Heart right ventricle (tissue), 16 donors: ENCODE measurements at regions of chr9 and their contacts with region 1.

Region 1: DNA sequence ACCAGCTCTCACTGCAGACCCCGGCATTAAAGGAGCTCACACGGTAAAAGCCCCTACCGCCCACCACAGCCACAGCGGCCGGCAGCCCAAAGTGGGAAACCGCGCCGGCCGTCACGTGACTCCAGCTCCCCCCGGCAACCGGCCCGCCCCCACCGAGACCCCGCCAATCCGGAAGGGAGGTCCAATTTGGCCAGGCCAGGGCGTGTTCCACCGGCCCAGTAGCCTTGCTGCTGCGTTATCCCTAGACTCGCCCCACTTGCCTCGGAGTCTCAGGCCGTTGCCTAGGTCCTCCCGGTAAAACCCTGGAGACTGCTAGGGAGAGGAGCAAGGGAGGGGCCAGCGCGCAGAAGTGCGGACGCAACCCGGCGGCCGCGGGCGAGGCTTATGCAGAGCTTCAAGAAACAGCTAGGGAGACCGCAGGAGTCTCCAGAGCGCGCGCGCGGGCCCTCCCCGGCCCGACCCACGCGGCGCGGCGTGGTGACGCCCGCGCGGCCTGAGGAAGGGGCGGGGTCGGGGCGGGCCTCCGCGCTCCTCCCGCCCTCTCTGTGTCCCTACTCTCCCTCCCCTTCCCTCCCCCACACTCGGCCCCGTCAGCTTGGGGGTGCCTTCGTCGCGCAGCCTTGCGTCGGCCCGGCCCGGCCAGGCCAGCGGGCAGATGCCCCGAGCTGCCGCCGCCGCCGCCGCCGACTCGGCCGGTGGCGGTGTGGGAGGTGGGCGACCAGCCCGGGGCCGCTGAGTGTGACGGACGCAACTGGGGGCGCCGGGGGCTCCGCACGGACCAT is at the start of gene RIC1:
- DNase-seq: peak; percentile 92 to 93
- ATAC-seq: peak; percentile 93 to 98 (median 96)
- H3K4me3 ChIP-seq: peak within 1 kb of the TSS; percentile 89 to 100 (median 94)
- H3K27ac ChIP-seq: peak within 1 kb of the TSS; percentile 94 to 100 (median 97)
- H3K4me1 ChIP-seq: peaks cover 0 to 77% (median 47%) of the 10 kb centered on the region in 9 donors
- H3K27me3 ChIP-seq: no peaks in the 10 kb centered on the region
- CTCF ChIP-seq: peak in 5 of 9 donors; percentile 5 to 26 (median 22)
- total RNA-seq, gene RIC1: 7.8 to 13.8 (median 8.5) TPM

Region 2: DNA sequence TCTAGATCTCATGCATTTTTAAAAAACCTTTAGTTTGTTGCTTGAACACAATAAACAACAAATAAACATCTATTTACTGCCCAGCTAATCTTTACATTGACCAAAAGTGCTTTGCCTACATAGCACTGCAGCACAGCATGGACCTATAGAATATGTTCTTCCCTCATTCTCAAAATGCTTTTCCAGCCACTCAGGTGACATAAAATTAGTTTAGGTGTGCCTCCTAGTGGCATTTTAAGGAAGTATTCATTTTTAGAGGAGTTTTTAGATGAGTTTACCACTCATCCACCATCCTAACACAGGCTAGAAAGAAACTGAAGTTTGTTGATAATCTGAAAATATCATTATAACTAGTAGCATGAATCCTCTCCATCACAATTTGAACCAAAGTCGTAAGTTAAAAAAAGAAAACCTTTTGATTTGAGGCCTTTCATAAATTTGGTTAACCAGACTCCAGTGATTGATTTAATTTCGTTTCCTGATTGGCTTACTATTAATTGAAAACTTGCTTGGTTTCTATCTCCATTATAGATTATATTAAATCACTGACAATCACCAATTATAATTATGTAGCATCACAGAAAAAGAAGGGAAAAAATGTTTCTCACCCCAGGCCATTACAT is 203.6 kb before region 1 on chr9:
- intact Hi-C with region 1: no loop called
- DNase-seq: no peak
- ATAC-seq: no peak
- H3K4me3 ChIP-seq: no peak overlapping the region
- H3K27ac ChIP-seq: no peak overlapping the region
- H3K4me1 ChIP-seq: no peaks in the 10 kb centered on the region
- H3K27me3 ChIP-seq: no peaks in the 10 kb centered on the region
- CTCF ChIP-seq: peak in 7 of 9 donors; percentile 30 to 57 (median 46)

Region 3: GRCh38 chr9:5665059-5665458 is 36.3 kb after region 1 on chr9:
- intact Hi-C with region 1: loop called in 1 of 10 experiments (anchors 5 kb)
- DNase-seq: no peak
- ATAC-seq: peak in 3 of 8 donors; percentile 31 to 56 (median 42)
- H3K4me3 ChIP-seq: no peak overlapping the region
- H3K27ac ChIP-seq: no peak overlapping the region
- H3K4me1 ChIP-seq: peaks cover 0 to 13% (median 4%) of the 10 kb centered on the region in 9 donors
- H3K27me3 ChIP-seq: no peaks in the 10 kb centered on the region
- CTCF ChIP-seq: no peak

Region 4: DNA sequence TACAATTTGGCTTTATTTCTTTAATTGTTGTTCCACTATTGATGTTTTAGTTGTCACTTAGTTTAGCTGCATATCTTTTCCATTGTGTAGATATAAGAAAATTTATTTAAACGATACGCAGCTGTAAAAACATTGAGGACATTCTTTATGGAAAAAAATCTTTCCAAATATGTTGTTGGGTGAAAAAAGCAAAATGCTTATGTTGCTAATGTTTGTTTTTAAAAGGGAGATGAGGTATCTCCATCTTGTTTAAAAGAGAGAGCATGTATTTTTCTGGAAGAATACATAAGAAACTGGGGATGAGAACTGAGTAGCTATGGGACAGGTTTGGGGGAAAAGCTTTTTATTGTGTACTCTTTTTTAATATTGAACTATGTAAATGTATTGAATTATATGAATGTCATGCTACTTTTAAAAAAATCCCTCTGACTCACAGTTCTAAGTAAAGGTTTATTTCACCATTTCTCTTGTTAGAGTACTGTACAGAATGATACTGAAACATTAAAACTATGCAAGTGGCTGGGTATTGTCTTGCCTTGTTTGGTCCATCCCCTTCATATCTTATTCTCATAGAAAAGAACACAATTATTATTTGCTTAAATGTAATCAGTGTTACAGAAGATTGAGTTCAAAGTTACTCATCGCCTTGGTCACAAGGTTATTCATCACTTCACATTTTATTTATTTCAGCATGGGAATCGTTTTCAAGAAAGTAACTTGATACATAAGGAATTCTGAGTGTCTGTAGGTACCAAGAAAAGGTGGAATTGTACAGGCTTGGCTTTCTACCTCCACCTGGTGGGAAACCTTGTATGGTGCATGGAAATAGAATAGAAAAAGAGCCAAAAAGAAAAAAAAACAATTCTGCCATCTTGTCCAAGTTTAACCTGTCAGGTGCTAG is 86.0 kb after region 1 on chr9:
- intact Hi-C with region 1: loop called in 1 of 10 experiments (anchors 10 kb)
- DNase-seq: no peak
- ATAC-seq: no peak
- H3K4me3 ChIP-seq: no peak overlapping the region
- H3K27ac ChIP-seq: no peak overlapping the region
- H3K4me1 ChIP-seq: peaks cover 0 to 5% (median 0%) of the 10 kb centered on the region in 9 donors
- H3K27me3 ChIP-seq: no peaks in the 10 kb centered on the region
- CTCF ChIP-seq: peak in 2 of 9 donors; percentile 14 to 19

Region 5: DNA sequence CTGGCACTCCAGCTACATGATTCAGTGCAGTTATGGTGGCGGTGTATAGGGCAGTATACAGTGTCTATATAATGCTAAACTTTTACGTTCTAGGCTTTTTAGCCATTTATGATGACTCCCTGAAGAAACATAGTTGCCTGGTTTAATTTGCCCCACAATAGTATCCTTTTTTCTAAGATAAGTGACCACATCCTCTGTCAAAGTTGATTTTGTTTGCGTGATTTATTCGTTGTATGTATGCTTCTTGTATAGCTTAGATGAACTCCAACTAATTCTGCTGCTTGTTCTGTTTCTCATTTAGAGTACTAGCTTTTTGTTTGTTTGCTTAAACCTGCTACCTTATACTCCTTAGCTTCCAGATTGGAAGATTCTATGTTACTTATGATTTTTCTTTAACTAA is 120.6 kb after region 1 on chr9:
- intact Hi-C with region 1: loop called in 1 of 10 experiments (anchors 10 kb)
- DNase-seq: no peak
- ATAC-seq: no peak
- H3K4me3 ChIP-seq: no peak overlapping the region
- H3K27ac ChIP-seq: no peak overlapping the region
- H3K4me1 ChIP-seq: no peaks in the 10 kb centered on the region
- H3K27me3 ChIP-seq: no peaks in the 10 kb centered on the region
- CTCF ChIP-seq: no peak

Region 6: GRCh38 chr9:5832543-5833529 is 204.1 kb after region 1 on chr9 and contains the start of gene ERMP1:
- intact Hi-C with region 1: loop called in 1 of 10 experiments (anchors 10 kb)
- DNase-seq: peak; percentile 89 to 92
- ATAC-seq: peak; percentile 94 to 96 (median 96)
- H3K4me3 ChIP-seq: peak within 1 kb of the TSS; percentile 33 to 96 (median 86)
- H3K27ac ChIP-seq: peak within 1 kb of the TSS in 9 of 10 donors; percentile 68 to 87 (median 77)
- H3K4me1 ChIP-seq: peaks cover 0 to 30% (median 18%) of the 10 kb centered on the region in 9 donors
- H3K27me3 ChIP-seq: no peaks in the 10 kb centered on the region
- CTCF ChIP-seq: peak; percentile 72 to 98 (median 89)
- total RNA-seq, gene ERMP1: 17.0 to 26.2 (median 22.9) TPM

Region 7: GRCh38 chr9:5953743-5954707 is 325.3 kb after region 1 on chr9:
- intact Hi-C with region 1: no loop called
- DNase-seq: no peak
- ATAC-seq: no peak
- H3K4me3 ChIP-seq: no peak overlapping the region
- H3K27ac ChIP-seq: no peak overlapping the region
- H3K4me1 ChIP-seq: peaks cover 0 to 15% (median 9%) of the 10 kb centered on the region in 9 donors
- H3K27me3 ChIP-seq: no peaks in the 10 kb centered on the region
- CTCF ChIP-seq: no peak